Activated CD8-positive, alpha-beta memory T cell treated with anti-CD3 and anti-CD28 coated beads, Interleukin-2, amount 10 ng/mL, durations not matched to agents 7 days and 5 days (primary cell): ENCODE measurements at regions of chr3 and their contacts with region 1.

Region 1: DNA sequence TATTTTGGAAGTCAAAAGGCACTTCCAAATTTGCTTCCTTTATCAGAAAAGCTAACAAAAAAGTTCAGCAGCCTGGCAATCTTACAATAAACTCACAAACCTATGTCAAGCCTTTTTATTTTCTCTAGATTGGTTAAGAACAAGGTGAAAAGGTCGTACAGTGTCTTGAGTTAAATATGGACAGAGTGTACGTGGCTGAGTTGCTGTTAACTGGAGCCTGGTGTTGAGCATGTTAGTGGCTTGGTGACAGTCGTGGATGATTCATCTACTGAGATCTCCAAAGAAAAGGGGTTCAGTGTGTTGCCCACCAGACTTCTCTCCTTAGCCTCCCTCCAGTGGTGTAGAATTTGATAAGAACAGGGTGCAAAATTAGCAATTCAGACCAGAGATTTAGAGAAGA is 89.7 kb downstream of the SSR3 start:
- DNase-seq: no peak
- ATAC-seq: no peak
- H3K4me3 Mint-ChIP-seq: no peak overlapping the region
- H3K27ac Mint-ChIP-seq: no peak overlapping the region
- H3K4me1 Mint-ChIP-seq: no peaks in the 10 kb centered on the region
- H3K27me3 Mint-ChIP-seq: peaks cover 19% of the 10 kb centered on the region

Region 2: DNA sequence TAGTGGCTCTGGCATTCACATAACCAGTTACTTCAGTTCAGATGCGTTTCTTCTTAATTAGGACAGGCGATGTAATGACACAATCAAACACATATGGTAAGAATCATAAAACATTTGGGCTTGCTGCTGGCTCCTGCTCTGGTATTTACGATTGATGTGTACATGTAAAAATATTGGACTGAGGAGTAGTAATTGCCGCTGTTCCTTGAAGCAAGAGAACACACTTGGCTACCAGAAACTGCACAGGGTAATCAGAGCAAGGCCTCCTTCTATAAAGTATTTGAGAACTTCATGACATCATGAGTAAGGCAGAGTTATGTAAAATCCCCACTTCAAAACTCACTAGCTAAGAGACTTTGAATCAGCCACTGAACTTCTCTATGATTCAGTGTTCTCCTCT is 68.3 kb before region 1 on chr3:
- CTCF ChIA-PET with region 1: no interaction called
- DNase-seq: no peak
- ATAC-seq: no peak
- H3K4me3 Mint-ChIP-seq: no peak overlapping the region
- H3K27ac Mint-ChIP-seq: no peak overlapping the region
- H3K4me1 Mint-ChIP-seq: no peaks in the 10 kb centered on the region
- H3K27me3 Mint-ChIP-seq: peaks cover 22% of the 10 kb centered on the region

Region 3: DNA sequence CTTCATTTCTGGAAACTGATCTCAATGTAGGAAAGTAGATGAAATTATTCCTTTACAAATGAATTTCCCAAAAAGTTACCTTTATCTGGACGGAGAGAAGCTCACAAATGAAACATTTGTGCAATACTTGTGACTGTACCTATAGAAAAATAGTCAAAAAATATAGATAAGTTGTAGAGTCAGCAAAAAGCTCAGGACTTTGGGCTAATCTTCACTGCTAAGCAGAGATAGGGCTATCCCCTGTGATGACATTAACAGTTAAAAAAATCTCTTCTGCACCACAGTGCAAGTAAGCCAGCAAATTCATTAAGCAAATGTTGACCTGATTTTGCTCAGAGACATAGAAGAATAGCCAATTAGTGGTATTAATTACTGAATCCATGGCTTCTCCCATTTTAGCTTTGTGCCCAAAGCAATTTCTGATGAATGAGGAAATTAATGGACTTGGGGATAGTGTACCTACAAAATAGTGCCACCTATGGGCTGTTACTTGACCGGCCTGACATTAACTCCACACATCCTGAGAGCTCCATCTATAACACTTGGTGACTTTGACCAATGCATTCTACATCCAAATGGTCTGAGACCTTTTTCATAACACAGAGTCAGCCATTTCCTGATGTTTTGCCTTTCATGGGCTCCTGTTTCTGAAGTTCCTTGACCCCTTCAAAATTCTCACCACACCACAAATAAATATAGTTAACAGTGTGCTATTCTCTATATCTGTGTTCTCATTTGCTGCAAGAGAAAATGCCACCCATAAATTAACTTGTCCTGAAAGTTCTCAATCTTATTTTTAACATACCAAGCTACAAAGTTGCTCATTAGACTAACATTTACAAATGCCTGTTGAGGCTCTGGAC is 15.3 kb before region 1 on chr3:
- CTCF ChIA-PET with region 1: interaction called, 11 read pairs
- DNase-seq: no peak
- ATAC-seq: peak; percentile 55
- H3K4me3 Mint-ChIP-seq: no peak overlapping the region
- H3K27ac Mint-ChIP-seq: no peak overlapping the region
- H3K4me1 Mint-ChIP-seq: no peaks in the 10 kb centered on the region
- H3K27me3 Mint-ChIP-seq: peaks cover 21% of the 10 kb centered on the region

Region 4: GRCh38 chr3:156594219-156594683 is 129.1 kb after region 1 on chr3:
- CTCF ChIA-PET with region 1: no interaction called
- DNase-seq: no peak
- ATAC-seq: no peak
- H3K4me3 Mint-ChIP-seq: no peak overlapping the region
- H3K27ac Mint-ChIP-seq: no peak overlapping the region
- H3K4me1 Mint-ChIP-seq: peaks cover 3% of the 10 kb centered on the region
- H3K27me3 Mint-ChIP-seq: peaks cover 16% of the 10 kb centered on the region